ENCODE measurements at regions of chr15 and their contacts with region 1.

Region 1: DNA sequence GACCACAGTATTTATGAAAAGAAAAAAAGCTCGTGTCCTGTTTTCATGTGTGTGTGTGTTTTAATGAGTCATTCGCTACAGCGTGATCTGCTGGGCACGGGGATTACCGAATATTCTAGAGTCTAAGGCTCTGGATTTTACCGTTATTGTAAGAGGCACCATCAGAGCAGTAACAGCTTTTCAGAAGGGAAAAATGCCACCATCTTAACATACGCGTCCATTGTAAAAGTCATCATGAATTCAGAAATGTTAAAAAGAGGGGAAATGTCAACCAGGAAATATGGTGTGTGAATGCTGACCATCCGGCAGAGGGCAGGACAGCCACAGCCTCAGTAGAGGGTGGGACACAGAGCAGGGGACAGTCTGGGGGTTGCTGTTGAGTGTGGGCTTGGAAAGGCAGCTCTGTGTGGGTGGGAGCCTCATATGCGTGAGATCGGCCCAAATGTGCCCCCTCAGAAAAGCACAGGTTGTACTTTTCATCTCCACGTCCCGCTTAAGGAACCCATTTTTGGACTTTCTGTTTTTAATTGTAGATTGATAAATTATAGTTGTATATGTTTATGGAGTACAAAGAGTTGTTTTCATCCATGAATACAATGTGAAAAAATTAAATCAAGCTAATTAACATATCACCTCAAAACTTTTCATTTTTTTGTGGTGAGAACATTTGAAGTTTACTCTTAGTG is 69.6 kb downstream of the ASB7 start:
- DNase-seq: no peak
- ATAC-seq: peak in 5 of 8 donors; percentile 45 to 65 (median 54)
- H3K4me3 ChIP-seq: no peak overlapping the region
- H3K27ac ChIP-seq: no peak overlapping the region
- H3K4me1 ChIP-seq: peaks cover 0 to 14% (median 10%) of the 10 kb centered on the region in 9 donors
- H3K27me3 ChIP-seq: peaks cover 0 to 8% (median 0%) of the 10 kb centered on the region in 7 donors
- CTCF ChIP-seq: peak in 8 of 9 donors; percentile 17 to 56 (median 46)

Region 2: GRCh38 chr15:100694381-100695021 is 22.5 kb after region 1 on chr15:
- intact Hi-C with region 1: no loop called
- DNase-seq: no peak
- ATAC-seq: peak in 6 of 8 donors; percentile 39 to 53 (median 50)
- H3K4me3 ChIP-seq: no peak overlapping the region
- H3K27ac ChIP-seq: peak overlapping the region in 7 of 10 donors; percentile 20 to 81 (median 42)
- H3K4me1 ChIP-seq: peaks cover 0 to 9% (median 0%) of the 10 kb centered on the region in 9 donors
- H3K27me3 ChIP-seq: peaks cover 0 to 11% (median 0%) of the 10 kb centered on the region in 7 donors
- CTCF ChIP-seq: no peak

Region 3: DNA sequence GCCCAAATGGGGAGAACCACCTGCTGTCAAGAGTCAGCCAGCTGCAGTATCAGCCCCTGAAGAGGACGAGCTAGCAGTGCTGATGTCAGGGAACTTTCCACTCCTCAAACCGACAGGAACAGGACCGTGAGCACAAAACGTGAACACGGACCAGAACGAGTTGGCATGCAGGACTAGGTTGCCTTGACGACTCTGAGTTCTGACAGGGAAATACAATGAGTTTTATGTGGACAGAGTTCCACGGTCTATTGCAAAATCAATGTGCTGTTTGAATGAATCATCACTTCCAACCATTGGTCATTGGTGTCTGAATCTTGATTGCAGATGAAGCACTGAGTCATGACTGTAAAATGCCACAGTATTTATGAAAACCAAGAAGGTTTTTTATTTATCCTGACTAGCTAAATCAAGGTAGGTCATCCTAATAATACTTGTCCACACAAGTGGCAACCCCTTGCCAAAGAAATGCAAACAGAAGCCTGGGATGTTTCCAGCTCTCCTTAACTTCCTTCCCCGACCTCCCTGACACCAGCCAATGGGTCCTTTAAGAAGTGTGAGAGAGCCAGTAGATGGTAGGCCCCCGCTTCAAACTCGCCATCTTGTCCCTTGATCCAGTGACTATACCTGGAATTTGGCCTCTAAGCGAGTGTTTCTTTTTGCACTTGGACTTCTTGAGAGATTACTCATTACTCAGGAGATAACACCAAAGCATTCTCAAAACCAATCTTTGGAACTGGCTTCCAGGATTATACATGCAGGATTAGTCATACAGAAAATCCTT is 50.0 kb after region 1 on chr15:
- intact Hi-C with region 1: loop called in 1 of 10 experiments (anchors 10 kb)
- DNase-seq: peak; percentile 30 to 53
- ATAC-seq: peak; percentile 69 to 88 (median 78)
- H3K4me3 ChIP-seq: no peak overlapping the region
- H3K27ac ChIP-seq: peak overlapping the region in 8 of 10 donors; percentile 37 to 80 (median 62)
- H3K4me1 ChIP-seq: peaks cover 0 to 34% (median 4%) of the 10 kb centered on the region in 9 donors
- H3K27me3 ChIP-seq: no peaks in the 10 kb centered on the region
- CTCF ChIP-seq: no peak

Region 4: DNA sequence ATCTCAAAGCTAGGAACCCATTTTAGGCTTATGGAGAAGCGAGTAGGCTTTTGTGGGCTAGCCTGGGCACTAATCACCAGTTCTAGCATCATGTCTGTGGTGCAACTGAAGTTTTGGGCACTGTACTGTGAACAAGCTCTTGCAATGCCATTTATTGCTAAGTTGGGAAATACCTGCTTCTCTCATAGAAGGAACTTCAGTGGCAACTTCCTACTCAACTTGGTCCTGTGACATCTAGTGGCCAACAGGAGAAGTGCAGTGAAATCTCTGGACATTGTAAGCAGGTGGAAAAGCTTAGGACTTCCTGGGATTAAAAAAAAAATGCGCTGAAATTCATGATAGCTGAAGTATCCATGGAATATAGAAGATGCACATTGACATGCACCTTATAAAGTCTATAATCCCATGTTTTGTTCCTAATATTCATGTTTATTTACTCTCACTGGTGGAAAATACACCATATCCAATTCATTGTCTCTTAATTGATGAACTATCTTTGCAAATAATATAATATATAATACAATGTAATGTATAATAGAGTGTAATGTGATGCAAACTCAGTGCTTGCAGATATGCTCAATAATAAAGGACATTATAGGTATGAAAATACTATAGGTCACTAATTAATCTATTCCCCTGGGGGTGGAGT is 201.2 kb after region 1 on chr15:
- intact Hi-C with region 1: loop called in 1 of 10 experiments (anchors 5 kb)
- DNase-seq: peak in 1 of 2 donors; percentile 60
- ATAC-seq: peak in 7 of 8 donors; percentile 61 to 78 (median 66)
- H3K4me3 ChIP-seq: no peak overlapping the region
- H3K27ac ChIP-seq: no peak overlapping the region
- H3K4me1 ChIP-seq: no peaks in the 10 kb centered on the region
- H3K27me3 ChIP-seq: peaks cover 2 to 30% (median 21%) of the 10 kb centered on the region in 7 donors
- CTCF ChIP-seq: peak; percentile 82 to 93 (median 91)

Measured in heart right ventricle (tissue), 16 donors.